ENCODE measurements at regions of chr19 and their contacts with region 1.

Region 1: DNA sequence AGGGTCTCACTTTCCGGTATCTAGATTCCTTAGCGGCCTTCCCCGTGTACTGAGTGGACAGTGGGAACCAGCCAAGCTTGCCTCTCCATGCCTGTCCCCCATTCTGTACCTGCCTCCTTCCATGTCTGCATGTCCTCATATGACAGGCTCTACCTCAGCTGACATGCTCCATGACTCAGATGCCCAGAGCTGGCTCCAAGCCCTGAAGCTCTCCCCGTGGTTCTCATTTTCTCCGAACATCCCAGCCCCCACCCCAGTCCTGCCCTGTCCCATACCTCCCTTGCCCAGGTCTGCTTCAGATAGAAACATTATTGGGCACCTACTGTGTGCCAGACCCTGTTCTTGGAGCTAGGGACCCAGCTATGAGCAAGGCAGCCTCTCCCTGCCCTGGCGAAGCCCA is 17.1 kb upstream of the SHFL start:
- DNase-seq: no peak
- H3K4me3 ChIP-seq: no peak overlapping the region
- H3K27ac ChIP-seq: no peak overlapping the region
- H3K4me1 ChIP-seq: no peaks in the 10 kb centered on the region
- H3K27me3 ChIP-seq: peaks cover 0 to 10% of the 10 kb centered on the region in 2 donors
- CTCF ChIP-seq: no peak
- POLR2A ChIP-seq: no peak

Region 2: DNA sequence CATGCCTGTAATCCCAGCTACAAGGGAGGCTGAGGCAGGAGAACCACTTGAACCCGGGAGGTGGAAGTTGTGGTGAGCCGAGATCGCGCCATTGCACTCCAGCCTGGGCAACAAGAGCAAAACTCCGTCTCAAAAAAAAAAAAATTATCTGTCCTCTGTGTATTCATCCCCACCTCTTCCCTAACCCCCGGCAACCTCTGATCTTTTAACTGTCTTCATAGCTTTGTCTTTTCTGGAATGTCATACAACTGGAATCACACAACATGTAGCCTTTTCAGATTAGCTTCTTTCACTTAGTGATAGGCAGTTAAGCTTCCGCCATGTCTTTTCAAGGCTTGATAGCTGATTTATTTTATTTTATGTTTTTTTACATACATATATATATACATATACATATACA is 456.6 kb after region 1 on chr19:
- intact Hi-C with region 1: loop called (anchors 5 kb)
- DNase-seq: no peak
- H3K4me3 ChIP-seq: no peak overlapping the region
- H3K27ac ChIP-seq: no peak overlapping the region
- H3K4me1 ChIP-seq: no peaks in the 10 kb centered on the region
- H3K27me3 ChIP-seq: no peaks in the 10 kb centered on the region
- CTCF ChIP-seq: no peak
- POLR2A ChIP-seq: no peak